Dorsolateral prefrontal cortex (tissue), 120 donors: ENCODE measurements at regions of chr19 and their contacts with region 1.

Region 1: DNA sequence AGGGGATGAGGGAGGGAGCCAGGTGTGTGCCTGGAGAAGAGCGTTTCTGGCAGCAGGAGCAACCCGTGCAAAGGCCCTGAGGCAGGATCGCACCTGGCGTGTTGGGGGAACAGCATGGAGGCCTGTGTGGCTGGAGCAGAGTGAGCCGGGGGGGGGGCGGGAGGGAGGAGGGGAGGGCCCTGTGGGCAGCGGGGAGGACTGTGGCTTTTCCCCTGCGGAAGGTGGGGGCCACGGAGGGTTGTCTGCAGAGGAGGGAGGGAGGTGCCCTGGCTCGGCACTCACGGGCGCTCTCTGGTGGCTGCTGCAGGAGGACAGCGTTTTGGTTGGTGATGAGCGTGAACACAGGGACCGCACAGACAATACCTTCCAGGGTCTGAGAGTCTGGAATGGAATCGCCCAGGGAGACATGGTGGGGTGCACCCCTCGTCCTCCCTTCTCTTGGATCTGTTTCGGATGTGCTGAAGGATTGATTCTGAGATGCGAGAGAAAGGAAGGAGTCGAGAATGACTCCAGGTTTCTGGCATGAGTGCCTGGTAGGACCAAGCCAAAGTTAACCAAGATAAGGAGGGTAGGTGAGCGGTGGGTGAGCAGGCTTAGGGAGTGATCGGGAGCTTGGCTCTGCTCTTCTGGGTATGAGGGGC is 6.5 kb downstream of the RAB11B start:
- DNase-seq: peak in 9 of 10 donors; percentile 34 to 82 (median 71)
- H3K4me3 ChIP-seq: peak overlapping the region in 1 of 59 donors; percentile 6
- H3K27ac ChIP-seq: peak overlapping the region in 58 of 59 donors; percentile 39 to 100 (median 99)
- H3K27me3 ChIP-seq: no peaks in the 10 kb centered on the region
- CTCF ChIP-seq: peak; percentile 33 to 87 (median 71)

Region 2: GRCh38 chr19:8355631-8356402 is 40.9 kb before region 1 on chr19:
- intact Hi-C with region 1: loop called (anchors 2 to 5 kb)
- DNase-seq: no peak
- H3K4me3 ChIP-seq: no peak overlapping the region
- H3K27ac ChIP-seq: peak overlapping the region in 1 of 59 donors; percentile 10
- H3K27me3 ChIP-seq: peaks cover 0 to 6% (median 0%) of the 10 kb centered on the region in 45 donors
- CTCF ChIP-seq: no peak

Region 3: DNA sequence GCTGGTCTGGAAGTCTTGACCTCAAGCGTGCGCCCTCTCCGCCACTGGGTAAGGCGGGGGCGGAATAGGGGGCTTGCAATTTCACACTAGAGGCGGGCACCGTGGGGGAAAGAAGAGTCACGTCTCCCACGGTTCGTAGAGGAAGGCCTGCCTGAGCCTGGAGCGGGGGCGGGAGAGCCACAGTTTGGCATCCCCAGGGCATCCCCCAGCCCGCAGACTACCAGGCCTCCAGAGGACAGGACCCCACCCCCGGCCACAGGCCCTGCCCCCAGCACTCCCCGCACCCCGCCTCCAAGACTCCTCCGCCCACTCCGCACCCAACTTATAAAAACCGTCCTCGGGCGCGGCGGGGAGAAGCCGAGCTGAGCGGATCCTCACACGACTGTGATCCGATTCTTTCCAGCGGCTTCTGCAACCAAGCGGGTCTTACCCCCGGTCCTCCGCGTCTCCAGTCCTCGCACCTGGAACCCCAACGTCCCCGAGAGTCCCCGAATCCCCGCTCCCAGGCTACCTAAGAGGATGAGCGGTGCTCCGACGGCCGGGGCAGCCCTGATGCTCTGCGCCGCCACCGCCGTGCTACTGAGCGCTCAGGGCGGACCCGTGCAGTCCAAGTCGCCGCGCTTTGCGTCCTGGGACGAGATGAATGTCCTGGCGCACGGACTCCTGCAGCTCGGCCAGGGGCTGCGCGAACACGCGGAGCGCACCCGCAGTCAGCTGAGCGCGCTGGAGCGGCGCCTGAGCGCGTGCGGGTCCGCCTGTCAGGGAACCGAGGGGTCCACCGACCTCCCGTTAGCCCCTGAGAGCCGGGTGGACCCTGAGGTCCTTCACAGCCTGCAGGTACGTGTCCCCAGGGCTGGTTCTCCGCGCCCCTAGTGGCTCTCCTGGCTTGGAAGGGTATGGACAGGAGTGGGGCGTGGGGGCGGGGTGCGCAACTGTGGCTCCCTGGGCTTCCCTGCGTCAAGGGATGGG is 32.6 kb before region 1 on chr19 and contains the start of gene ANGPTL4:
- intact Hi-C with region 1: loop called in 1 of 2 experiments (anchors 2 kb)
- DNase-seq: peak in 3 of 10 donors; percentile 50 to 53 (median 52)
- H3K4me3 ChIP-seq: peak within 1 kb of the TSS; percentile 36 to 76 (median 60)
- H3K27ac ChIP-seq: peak within 1 kb of the TSS in 55 of 59 donors; percentile 7 to 86 (median 71)
- H3K27me3 ChIP-seq: peaks cover 0 to 36% (median 4%) of the 10 kb centered on the region in 45 donors
- CTCF ChIP-seq: peak in 4 of 56 donors; percentile 2 to 10 (median 8)
- total RNA-seq, gene ANGPTL4: 5.9 to 298 (median 35.7) TPM